ENCODE measurements at regions of chr19 and their contacts with region 1.

Region 1: GRCh38 chr19:48738557-48739399 is 1.6 kb downstream of the RASIP1 start:
- DNase-seq: peak; percentile 96
- ATAC-seq: peak; percentile 93
- H3K4me3 Mint-ChIP-seq: peak overlapping the region; percentile 38
- H3K27ac Mint-ChIP-seq: peak overlapping the region; percentile 32
- H3K4me1 Mint-ChIP-seq: peaks cover 16% of the 10 kb centered on the region
- H3K27me3 Mint-ChIP-seq: peaks cover 6% of the 10 kb centered on the region
- CTCF ChIP-seq: no peak

Region 2: GRCh38 chr19:48674921-48675824 is 63.6 kb before region 1 on chr19:
- CTCF ChIA-PET with region 1: interaction called, 18 read pairs
- POLR2A ChIA-PET with region 1: no interaction called
- intact Hi-C with region 1: no loop called
- DNase-seq: peak; percentile 85
- ATAC-seq: peak; percentile 99
- H3K4me3 Mint-ChIP-seq: no peak overlapping the region
- H3K27ac Mint-ChIP-seq: no peak overlapping the region
- H3K4me1 Mint-ChIP-seq: peaks cover 3% of the 10 kb centered on the region
- H3K27me3 Mint-ChIP-seq: no peaks in the 10 kb centered on the region
- CTCF ChIP-seq: peak; percentile 75

Region 3: DNA sequence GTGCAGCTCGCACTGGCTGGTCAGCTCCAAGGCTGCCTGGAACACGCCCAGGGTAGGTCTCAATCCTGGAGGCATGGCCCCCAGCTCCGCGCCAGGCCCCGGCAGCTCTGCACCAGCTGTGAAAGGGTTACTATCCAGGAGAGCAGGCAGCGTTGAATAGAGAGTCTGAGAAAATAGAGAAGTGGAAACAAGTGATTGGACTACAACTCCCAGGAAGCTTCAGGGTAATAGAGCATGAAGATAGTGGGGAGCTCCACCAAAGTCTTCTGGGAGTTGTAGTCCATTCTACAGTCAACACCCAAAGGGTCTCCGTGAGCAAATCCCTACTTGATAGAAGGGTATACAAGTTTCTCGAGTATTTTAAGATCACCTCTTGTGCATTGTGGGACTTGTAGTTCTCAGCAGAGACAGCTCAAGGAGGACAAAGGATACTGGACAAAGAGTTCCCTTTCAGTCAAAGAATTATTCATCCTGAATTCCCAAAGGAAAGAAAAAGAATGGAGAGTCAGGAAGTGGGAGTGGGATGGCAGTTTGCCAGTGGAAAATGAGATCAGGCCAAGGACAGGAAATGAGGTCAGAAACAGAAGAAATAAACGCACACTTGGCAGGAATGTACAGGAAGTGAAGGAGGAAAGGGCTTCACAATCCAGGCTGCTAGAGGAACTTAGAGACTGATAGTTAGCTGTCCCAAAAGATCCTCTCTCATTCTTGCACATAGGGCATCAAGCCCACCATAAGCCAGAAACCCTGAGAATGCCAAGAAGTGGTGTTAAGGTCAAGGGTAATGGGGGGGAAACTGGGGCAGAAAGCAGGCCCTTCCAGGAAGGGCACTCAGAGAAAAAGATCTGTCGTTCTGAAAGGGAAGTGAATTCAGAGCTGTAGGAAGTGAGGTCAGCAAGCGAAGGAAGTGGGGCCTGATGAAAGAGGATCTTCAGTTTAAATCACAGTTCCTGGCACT is 13.7 kb before region 1 on chr19:
- CTCF ChIA-PET with region 1: interaction called, 19 read pairs
- POLR2A ChIA-PET with region 1: interaction called, 5 read pairs
- intact Hi-C with region 1: no loop called
- DNase-seq: peak; percentile 50
- ATAC-seq: peak; percentile 61
- H3K4me3 Mint-ChIP-seq: no peak overlapping the region
- H3K27ac Mint-ChIP-seq: peak overlapping the region; percentile 96
- H3K4me1 Mint-ChIP-seq: peaks cover 22% of the 10 kb centered on the region
- H3K27me3 Mint-ChIP-seq: no peaks in the 10 kb centered on the region
- CTCF ChIP-seq: no peak